A549 (cell line): ENCODE measurements at regions of chr15 and their contacts with region 1.

Region 1: GRCh38 chr15:78195735-78196201 is 38.6 kb downstream of the ACSBG1 start:
- DNase-seq: peak; percentile 57 to 78
- ATAC-seq: peak; percentile 92 to 96
- H3K4me3 ChIP-seq: no peak overlapping the region
- H3K27ac ChIP-seq: no peak overlapping the region
- H3K4me1 ChIP-seq: no peaks in the 10 kb centered on the region
- CTCF ChIP-seq: peak; percentile 89
- EP300 ChIP-seq: no peak
- POLR2A ChIP-seq: no peak
- RAD21 ChIP-seq: peak; percentile 83 to 87

Region 2: GRCh38 chr15:78000091-78000926 is 195.5 kb before region 1 on chr15:
- CTCF ChIA-PET with region 1: interaction called, 18 read pairs
- POLR2A ChIA-PET with region 1: no interaction called
- DNase-seq: peak; percentile 86 to 92
- ATAC-seq: peak; percentile 88 to 98
- H3K4me3 ChIP-seq: no peak overlapping the region
- H3K27ac ChIP-seq: no peak overlapping the region
- H3K4me1 ChIP-seq: peaks cover 6% of the 10 kb centered on the region
- CTCF ChIP-seq: peak; percentile 90
- EP300 ChIP-seq: no peak
- POLR2A ChIP-seq: no peak
- RAD21 ChIP-seq: peak; percentile 98 to 99

Region 3: GRCh38 chr15:78131295-78132061 is 64.3 kb before region 1 on chr15 and contains the start of gene CIB2:
- CTCF ChIA-PET with region 1: interaction called, 36 read pairs
- POLR2A ChIA-PET with region 1: no interaction called
- DNase-seq: peak; percentile 71 to 92
- ATAC-seq: peak; percentile 84 to 87
- H3K4me3 ChIP-seq: peak within 1 kb of the TSS; percentile 86
- H3K27ac ChIP-seq: peak within 1 kb of the TSS; percentile 91 to 94
- H3K4me1 ChIP-seq: peaks cover 38% of the 10 kb centered on the region
- CTCF ChIP-seq: peak; percentile 85
- EP300 ChIP-seq: no peak
- POLR2A ChIP-seq: peak; percentile 74
- RAD21 ChIP-seq: peak; percentile 61 to 81
- polyA plus RNA-seq, gene CIB2: 16.4 and 21.2 TPM in 2 replicates

Region 4: DNA sequence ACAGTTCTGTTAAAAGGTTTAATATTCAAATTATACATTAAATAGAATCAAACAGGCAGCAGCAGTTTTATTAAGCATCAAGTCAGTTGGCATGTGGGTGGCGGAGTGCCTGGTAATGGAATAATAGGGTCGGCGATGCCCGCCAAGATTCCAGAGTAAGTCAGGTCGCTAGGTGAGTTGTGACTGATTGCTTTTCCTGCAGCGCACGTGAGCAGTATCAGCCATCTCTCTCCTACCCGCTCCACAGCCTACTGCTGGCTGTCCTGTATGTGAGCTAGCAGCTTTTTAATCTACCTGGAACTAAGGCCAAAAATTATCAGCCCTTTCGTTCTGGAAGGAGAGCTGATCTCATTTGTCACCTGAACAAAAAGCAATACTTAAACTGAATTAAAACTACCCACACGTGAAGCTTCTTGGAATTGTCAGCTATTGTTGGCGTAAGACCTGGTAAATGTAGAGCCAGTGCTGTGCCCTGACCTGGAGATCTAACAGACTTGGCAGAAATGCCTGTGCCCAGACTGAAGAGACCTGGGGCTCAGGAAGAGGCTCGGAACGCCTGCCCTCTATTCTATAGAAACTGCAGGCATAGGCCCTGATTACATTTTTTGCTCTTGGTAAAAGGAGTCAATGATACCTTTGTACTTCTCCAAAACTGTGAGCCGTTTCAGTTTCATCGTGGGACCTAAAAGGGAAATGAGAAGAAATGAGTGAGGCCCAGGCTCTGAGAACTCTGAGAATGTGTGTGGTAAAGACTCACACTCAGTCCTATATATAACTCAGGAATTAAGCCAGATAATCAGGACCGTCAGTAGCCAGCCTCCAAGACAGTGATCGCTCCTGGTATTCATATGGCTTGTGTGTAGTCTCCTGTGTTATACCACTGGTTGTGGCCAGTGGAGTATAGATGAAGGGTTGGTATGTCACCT is 24.7 kb before region 1 on chr15:
- CTCF ChIA-PET with region 1: interaction called, 146 read pairs
- POLR2A ChIA-PET with region 1: no interaction called
- DNase-seq: no peak
- ATAC-seq: no peak
- H3K4me3 ChIP-seq: no peak overlapping the region
- H3K27ac ChIP-seq: no peak overlapping the region
- H3K4me1 ChIP-seq: no peaks in the 10 kb centered on the region
- CTCF ChIP-seq: no peak
- EP300 ChIP-seq: no peak
- POLR2A ChIP-seq: no peak
- RAD21 ChIP-seq: no peak

Region 5: DNA sequence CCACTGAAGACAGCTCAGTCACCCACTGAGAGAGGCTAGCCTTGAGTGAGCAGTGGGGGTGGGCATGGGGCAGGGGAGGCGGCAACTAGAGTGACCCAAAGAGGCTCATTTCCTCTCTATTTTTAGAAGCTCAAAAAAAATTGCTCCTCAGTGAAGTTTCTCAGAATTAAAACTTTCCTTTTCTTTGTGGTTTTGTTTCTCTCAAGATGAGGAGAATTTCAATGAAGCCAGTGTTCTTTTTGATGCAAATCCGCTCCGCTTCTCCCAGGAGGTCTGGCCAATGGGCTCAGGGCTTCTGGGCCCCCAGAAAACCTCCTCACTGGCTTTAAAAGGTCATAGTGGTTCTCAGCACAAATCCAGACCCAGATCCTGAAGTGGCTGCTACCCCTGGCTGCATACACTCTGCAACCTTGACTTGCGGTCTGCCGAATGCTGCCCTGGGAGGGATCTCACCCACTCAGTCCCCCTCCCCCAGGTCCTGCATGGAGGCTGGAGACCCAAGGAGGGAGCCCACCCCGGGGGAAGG is 38.8 kb after region 1 on chr15 and contains the start of gene ACSBG1:
- CTCF ChIA-PET with region 1: interaction called, 184 read pairs
- POLR2A ChIA-PET with region 1: no interaction called
- DNase-seq: no peak
- ATAC-seq: no peak
- H3K4me3 ChIP-seq: no peak within 1 kb of the TSS
- H3K27ac ChIP-seq: no peak within 1 kb of the TSS
- H3K4me1 ChIP-seq: no peaks in the 10 kb centered on the region
- CTCF ChIP-seq: no peak
- EP300 ChIP-seq: no peak
- POLR2A ChIP-seq: no peak
- RAD21 ChIP-seq: no peak
- polyA plus RNA-seq, gene ACSBG1: 0.16 and 0.21 TPM in 2 replicates